GM10248 (cell line): ENCODE measurements at regions of chr10 and their contacts with region 1.

Region 1: GRCh38 chr10:103458720-103459119 is at the start of gene CALHM1:
- DNase-seq: peak; percentile 86
- CTCF ChIP-seq: no peak

Region 2: DNA sequence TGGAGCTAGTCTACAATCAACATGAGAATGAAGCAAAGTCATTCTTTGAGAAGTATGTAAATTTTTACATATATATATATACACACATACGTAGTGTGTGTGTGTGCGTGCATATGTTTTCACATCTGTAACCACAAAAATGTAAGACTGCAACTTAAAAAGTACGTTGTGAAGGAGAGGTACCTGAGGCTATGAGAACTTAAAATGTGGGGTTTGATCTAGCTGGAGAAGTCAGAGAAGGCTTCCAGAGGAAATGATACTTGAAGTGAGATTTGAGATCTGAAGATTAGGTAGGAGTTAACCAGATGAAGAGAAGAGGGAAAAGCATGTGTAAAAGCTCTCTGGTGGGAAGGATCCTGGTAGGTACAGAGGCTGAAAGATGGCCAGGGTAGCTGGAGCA is 85.2 kb before region 1 on chr10:
- CTCF ChIA-PET with region 1: no interaction called
- POLR2A ChIA-PET with region 1: interaction called, 13 read pairs
- DNase-seq: peak; percentile 17
- CTCF ChIP-seq: no peak

Region 3: GRCh38 chr10:104146882-104147281 is 688.2 kb after region 1 on chr10:
- CTCF ChIA-PET with region 1: no interaction called
- POLR2A ChIA-PET with region 1: no interaction called
- DNase-seq: no peak
- CTCF ChIP-seq: no peak